ENCODE measurements at regions of chr5 and their contacts with region 1.

Region 1: GRCh38 chr5:37014321-37014720 is 137.8 kb downstream of the NIPBL start:
- DNase-seq: no peak
- H3K4me3 ChIP-seq: no peak overlapping the region
- H3K27ac ChIP-seq: no peak overlapping the region
- H3K4me1 ChIP-seq: no peaks in the 10 kb centered on the region
- H3K27me3 ChIP-seq: no peaks in the 10 kb centered on the region
- CTCF ChIP-seq: no peak
- EP300 ChIP-seq: no peak
- POLR2A ChIP-seq: no peak

Region 2: DNA sequence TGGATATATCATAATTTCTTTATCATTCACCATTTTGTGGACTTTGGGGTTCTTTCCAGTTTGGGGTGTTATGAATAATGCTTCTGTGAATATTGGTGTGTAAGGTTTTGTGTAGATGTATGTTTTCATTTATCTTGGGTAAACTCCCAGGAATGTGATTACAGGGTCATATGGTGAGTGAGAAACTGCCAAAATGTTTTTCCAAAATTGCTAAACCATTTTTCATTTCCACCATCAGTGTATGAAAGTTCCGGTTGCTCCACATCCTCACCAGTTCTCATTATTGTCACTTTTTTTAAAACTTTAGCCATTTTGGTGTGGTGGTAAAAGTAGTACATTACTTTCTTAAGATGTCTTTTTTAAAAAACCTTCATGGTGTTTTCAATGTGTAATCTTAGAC is 15.1 kb after region 1 on chr5:
- in situ Hi-C with region 1: no loop called
- intact Hi-C with region 1: loop called (anchors 1 kb)
- DNase-seq: no peak
- H3K4me3 ChIP-seq: no peak overlapping the region
- H3K27ac ChIP-seq: no peak overlapping the region
- H3K4me1 ChIP-seq: no peaks in the 10 kb centered on the region
- H3K27me3 ChIP-seq: no peaks in the 10 kb centered on the region
- CTCF ChIP-seq: no peak
- EP300 ChIP-seq: no peak
- POLR2A ChIP-seq: no peak

Region 3: GRCh38 chr5:37043688-37044087 is 29.4 kb after region 1 on chr5:
- in situ Hi-C with region 1: no loop called
- intact Hi-C with region 1: no loop called
- DNase-seq: no peak
- H3K4me3 ChIP-seq: no peak overlapping the region
- H3K27ac ChIP-seq: no peak overlapping the region
- H3K4me1 ChIP-seq: no peaks in the 10 kb centered on the region
- H3K27me3 ChIP-seq: no peaks in the 10 kb centered on the region
- CTCF ChIP-seq: no peak
- EP300 ChIP-seq: no peak
- POLR2A ChIP-seq: no peak

Region 4: GRCh38 chr5:37071901-37072581 is 57.7 kb after region 1 on chr5:
- in situ Hi-C with region 1: no loop called
- intact Hi-C with region 1: no loop called
- DNase-seq: no peak
- H3K4me3 ChIP-seq: no peak overlapping the region
- H3K27ac ChIP-seq: no peak overlapping the region
- H3K4me1 ChIP-seq: no peaks in the 10 kb centered on the region
- H3K27me3 ChIP-seq: no peaks in the 10 kb centered on the region
- CTCF ChIP-seq: no peak
- EP300 ChIP-seq: no peak
- POLR2A ChIP-seq: no peak

Measured in transverse colon (tissue), 4 donors.